Activated naive CD4-positive, alpha-beta T cell treated with anti-CD3 and anti-CD28 coated beads for 36 hours (primary cell): ENCODE measurements at regions of chr1 and their contacts with region 1.

Region 1: DNA sequence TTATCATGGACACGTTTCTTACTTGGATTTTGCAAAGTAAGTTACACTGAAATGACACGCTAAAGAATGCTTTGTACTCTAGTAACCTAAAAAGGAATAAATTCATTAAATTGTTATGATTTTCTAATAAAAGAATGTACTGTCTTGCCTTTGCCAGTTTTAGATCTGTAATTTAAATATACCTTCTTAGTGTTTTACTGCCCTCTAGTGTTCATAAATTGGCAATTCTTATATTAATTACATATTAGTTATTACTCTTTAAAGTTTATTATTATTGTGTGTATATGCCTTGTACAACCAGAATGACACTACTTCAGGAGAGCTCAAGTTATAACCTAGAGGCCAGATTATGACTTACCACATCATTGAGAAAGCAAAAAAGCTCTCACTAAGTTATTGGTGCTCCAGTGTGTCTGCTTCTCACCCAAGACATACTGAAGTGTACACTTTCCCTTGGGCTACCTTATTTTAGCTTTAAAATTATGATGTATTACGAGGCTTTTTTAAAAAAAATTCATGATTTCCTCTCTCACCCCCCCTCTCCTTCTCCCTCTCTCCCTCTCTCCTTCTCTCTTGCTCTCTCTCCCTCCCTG is 169.9 kb downstream of the HS2ST1 start:
- DNase-seq: no peak
- H3K4me3 Mint-ChIP-seq: no peak overlapping the region
- H3K27ac Mint-ChIP-seq: no peak overlapping the region
- H3K4me1 Mint-ChIP-seq: peaks cover 8% of the 10 kb centered on the region
- H3K27me3 Mint-ChIP-seq: no peaks in the 10 kb centered on the region

Region 2: GRCh38 chr1:86765073-86765472 is 319.3 kb before region 1 on chr1:
- CTCF ChIA-PET with region 1: no interaction called
- intact Hi-C with region 1: no loop called
- DNase-seq: no peak
- H3K4me3 Mint-ChIP-seq: no peak overlapping the region
- H3K27ac Mint-ChIP-seq: no peak overlapping the region
- H3K4me1 Mint-ChIP-seq: no peaks in the 10 kb centered on the region
- H3K27me3 Mint-ChIP-seq: peaks cover 9% of the 10 kb centered on the region

Region 3: GRCh38 chr1:86825319-86825718 is 259.0 kb before region 1 on chr1:
- CTCF ChIA-PET with region 1: interaction called, 11 read pairs
- intact Hi-C with region 1: no loop called
- DNase-seq: no peak
- H3K4me3 Mint-ChIP-seq: no peak overlapping the region
- H3K27ac Mint-ChIP-seq: no peak overlapping the region
- H3K4me1 Mint-ChIP-seq: no peaks in the 10 kb centered on the region
- H3K27me3 Mint-ChIP-seq: no peaks in the 10 kb centered on the region

Region 4: DNA sequence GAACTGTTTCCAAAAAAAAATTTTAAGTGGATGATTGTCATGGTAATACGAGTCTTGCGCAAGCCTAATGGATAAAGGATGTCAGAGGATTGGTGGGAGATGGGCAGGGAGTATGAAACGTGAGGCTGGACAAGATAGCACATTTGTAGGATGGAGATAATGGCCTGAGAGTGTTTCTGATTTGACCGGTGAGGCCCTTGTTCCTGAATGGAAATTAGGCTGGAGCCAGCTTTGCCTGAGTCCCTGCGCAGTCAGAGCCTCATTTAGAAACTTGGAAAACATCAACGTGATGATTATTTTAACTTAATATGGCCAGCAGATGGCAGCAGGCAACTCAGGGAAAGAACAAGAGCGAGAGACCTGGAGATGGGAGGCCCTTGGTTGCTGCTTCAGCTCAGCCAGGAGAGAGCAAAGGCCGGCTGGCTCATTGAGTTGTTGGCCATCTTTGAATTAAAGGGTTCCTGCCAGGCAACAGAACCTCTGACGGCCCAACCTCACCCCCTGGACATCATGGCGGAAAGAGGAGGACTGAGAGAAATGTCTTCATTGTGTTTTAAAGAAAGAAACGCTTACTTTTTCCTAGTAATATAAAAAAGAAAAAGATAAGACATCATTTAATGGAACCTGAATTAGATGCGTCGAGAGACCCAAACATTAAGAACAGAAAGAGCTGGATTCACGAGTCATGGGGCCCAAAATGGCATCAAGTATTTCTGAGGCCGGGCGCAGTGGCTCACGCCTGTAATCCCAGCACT is 250.7 kb before region 1 on chr1:
- CTCF ChIA-PET with region 1: interaction called, 58 read pairs
- intact Hi-C with region 1: loop called (anchors 1 kb)
- DNase-seq: peak; percentile 76
- H3K4me3 Mint-ChIP-seq: no peak overlapping the region
- H3K27ac Mint-ChIP-seq: no peak overlapping the region
- H3K4me1 Mint-ChIP-seq: peaks cover 4% of the 10 kb centered on the region
- H3K27me3 Mint-ChIP-seq: peaks cover 2% of the 10 kb centered on the region

Region 5: GRCh38 chr1:86965012-86965826 is 119.1 kb before region 1 on chr1:
- CTCF ChIA-PET with region 1: interaction called, 3 read pairs
- intact Hi-C with region 1: loop called (anchors 1 kb)
- DNase-seq: peak; percentile 44
- H3K4me3 Mint-ChIP-seq: no peak overlapping the region
- H3K27ac Mint-ChIP-seq: no peak overlapping the region
- H3K4me1 Mint-ChIP-seq: no peaks in the 10 kb centered on the region
- H3K27me3 Mint-ChIP-seq: no peaks in the 10 kb centered on the region

Region 6: GRCh38 chr1:87219626-87220225 is 135.4 kb after region 1 on chr1:
- CTCF ChIA-PET with region 1: no interaction called
- intact Hi-C with region 1: no loop called
- DNase-seq: no peak
- H3K4me3 Mint-ChIP-seq: no peak overlapping the region
- H3K27ac Mint-ChIP-seq: no peak overlapping the region
- H3K4me1 Mint-ChIP-seq: no peaks in the 10 kb centered on the region
- H3K27me3 Mint-ChIP-seq: peaks cover 5% of the 10 kb centered on the region